ENCODE measurements at regions of chr1 and their contacts with region 1.

Region 1: DNA sequence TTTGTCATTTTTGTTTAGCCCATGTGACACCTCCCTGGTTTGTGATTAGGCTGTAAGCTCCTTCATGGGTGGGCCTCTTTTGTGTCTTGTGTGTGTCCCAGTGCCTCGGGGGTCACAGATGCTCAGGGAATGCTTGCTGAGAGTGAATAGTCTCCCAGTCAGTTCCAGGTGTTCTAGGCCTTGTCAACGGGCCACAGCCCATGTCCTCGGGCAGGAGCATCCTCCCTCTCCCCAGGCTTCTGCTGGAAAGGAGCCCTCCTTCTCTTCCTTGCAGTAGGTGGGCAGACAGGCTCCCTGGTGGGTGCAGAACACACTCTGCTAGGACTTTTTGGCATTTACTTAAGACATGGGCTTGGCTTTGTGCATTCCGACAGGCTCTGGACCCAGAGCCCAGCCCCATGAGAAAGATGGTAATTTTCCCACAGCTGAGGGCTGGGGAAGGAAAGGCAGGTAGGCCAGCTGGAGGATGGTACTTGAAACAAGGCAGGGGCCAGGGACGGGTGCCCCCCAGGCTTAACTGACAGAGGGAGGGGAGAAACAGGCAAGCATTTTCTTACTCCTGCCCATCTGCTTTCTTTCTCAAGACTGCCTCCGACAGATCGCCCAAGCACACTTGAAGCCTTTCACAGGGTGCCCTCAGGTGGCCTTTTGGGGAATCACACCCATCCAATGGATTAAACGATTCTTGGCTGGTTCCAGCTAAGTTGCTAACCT is 7.1 kb upstream of the CPLANE2 start:
- DNase-seq: peak; percentile 54 to 84 (median 77)
- ATAC-seq: peak; percentile 98
- H3K4me3 ChIP-seq: no peak overlapping the region
- H3K4me3 Mint-ChIP-seq: no peak overlapping the region
- H3K27ac ChIP-seq: peak overlapping the region in 1 of 2 experiments; percentile 3
- H3K27ac Mint-ChIP-seq: peak overlapping the region; percentile 41
- H3K4me1 ChIP-seq: peaks cover 3% of the 10 kb centered on the region
- H3K4me1 Mint-ChIP-seq: peaks cover 9% of the 10 kb centered on the region
- H3K27me3 ChIP-seq: no peaks in the 10 kb centered on the region
- H3K27me3 Mint-ChIP-seq: no peaks in the 10 kb centered on the region
- CTCF ChIP-seq: peak; percentile 74

Region 2: DNA sequence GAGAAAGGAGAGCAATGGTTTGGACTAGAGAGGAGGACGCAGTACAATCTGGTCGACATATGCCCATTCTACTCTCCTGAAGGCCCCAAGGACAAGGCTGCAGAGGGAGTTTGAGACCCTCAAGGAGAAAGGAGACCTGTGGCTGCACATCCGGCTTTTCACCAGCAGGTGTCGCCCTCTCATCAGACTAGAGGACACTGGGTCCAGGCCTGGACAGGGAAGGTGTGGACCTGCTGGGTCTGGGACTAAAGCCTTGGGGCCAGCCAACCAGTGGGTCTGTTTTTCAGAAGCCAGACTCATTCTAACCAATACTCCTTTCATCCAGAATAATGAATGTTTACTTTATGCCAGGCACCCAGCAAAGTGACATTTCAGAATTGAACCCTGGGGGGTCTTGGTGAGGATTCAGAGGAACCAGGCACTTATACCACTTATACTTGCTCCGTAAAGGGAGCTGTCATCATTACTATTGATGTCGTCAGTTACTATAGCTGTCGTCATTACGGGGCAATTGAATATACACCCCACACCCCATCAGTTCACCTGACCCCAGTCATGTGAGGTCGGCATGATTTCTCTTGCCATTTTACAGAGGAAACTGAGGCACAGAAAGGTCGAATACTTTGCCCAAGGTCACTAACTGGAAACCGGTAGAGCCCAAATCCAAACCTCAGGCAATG is 234.9 kb before region 1 on chr1:
- CTCF ChIA-PET with region 1: no interaction called
- POLR2A ChIA-PET with region 1: no interaction called
- intact Hi-C with region 1: loop called in 1 of 2 experiments (anchors 5 kb)
- DNase-seq: peak; percentile 53 to 82 (median 73)
- ATAC-seq: peak; percentile 69
- H3K4me3 ChIP-seq: no peak overlapping the region
- H3K4me3 Mint-ChIP-seq: no peak overlapping the region
- H3K27ac ChIP-seq: no peak overlapping the region
- H3K27ac Mint-ChIP-seq: no peak overlapping the region
- H3K4me1 ChIP-seq: peaks cover 5% of the 10 kb centered on the region
- H3K4me1 Mint-ChIP-seq: peaks cover 4% of the 10 kb centered on the region
- H3K27me3 ChIP-seq: peaks cover 0 to 2% of the 10 kb centered on the region in 2 experiments
- H3K27me3 Mint-ChIP-seq: peaks cover 5% of the 10 kb centered on the region
- CTCF ChIP-seq: peak; percentile 99

Region 3: DNA sequence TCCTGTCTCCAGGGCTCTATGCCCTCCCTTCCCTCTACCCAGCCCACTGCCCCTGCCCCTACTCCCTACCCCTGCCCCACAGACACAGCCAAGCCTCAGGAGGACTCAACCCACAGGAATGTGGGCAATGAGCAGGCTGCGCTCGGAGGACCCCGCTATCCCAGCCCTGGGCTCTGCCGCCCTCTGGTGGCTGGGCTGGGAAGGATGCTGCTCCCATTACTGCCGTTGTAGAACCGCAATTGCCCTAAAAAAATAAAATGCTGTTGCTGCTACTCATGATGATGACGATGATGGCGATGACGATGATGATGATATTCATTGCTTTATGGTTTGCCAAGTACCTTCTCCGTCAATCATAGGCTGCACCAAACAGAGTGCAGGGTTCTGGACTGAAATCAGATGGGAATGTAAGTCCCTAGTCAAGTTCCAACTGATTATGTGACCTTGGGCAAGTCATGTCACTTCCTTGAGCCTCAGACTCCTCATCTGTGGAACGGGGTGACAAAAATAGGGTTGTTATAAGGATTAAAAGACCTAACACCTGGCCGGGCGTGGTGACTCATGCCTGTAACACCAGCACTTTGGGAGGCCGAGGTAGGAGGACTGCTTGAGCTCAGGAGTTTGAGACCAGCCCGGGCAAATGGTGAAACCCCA is 56.2 kb before region 1 on chr1:
- CTCF ChIA-PET with region 1: interaction called, 17 read pairs
- POLR2A ChIA-PET with region 1: no interaction called
- intact Hi-C with region 1: loop called (anchors 1 to 2 kb)
- DNase-seq: peak; percentile 55 to 89 (median 76)
- ATAC-seq: peak; percentile 97
- H3K4me3 ChIP-seq: no peak overlapping the region
- H3K4me3 Mint-ChIP-seq: no peak overlapping the region
- H3K27ac ChIP-seq: no peak overlapping the region
- H3K27ac Mint-ChIP-seq: no peak overlapping the region
- H3K4me1 ChIP-seq: peaks cover 5% of the 10 kb centered on the region
- H3K4me1 Mint-ChIP-seq: peaks cover 4% of the 10 kb centered on the region
- H3K27me3 ChIP-seq: peaks cover 0 to 2% of the 10 kb centered on the region in 2 experiments
- H3K27me3 Mint-ChIP-seq: peaks cover 7% of the 10 kb centered on the region
- CTCF ChIP-seq: peak; percentile 97

Region 4: DNA sequence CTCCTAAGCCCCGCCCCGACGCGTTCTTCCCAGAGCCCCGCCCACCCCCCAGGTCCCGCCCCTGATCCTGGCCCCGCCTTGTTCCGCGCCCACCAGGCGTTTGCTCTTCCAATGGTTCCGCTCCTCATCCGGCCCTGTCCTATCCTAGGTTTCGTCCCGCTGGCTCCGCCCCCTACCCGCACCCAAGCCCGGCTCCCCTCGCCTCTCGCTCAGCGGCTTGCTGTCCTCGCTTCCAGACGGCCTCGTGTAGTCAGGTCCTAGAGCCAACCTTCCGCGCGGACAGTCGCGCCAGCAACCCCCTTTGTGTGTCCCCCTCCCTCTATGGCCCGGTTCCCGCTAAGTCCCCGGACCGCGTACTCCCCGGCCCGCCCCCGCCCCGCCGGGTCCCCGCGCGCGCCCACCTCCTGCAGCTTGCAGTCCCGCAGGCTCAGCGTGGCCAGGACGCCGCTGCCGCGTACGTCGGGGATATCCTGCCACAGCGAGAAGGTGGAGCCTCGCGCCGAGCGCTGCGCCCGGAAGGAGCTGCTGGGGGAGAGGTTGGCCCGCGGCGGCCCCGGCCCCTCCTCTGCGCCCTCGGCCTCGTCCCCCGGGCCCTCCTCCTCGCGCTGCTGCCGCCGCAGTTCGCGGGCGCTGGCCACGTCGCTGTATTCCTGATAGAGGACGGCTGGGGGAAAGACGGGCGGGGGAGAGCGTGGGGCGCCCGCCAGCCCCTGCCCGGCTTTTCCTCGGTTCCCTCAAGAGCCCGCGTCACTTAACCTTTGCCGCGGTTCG is 37.4 kb before region 1 on chr1:
- CTCF ChIA-PET with region 1: interaction called, 42 read pairs
- POLR2A ChIA-PET with region 1: no interaction called
- intact Hi-C with region 1: loop called (anchors 1 kb)
- DNase-seq: peak; percentile 84 to 97 (median 93)
- ATAC-seq: peak; percentile 86
- H3K4me3 ChIP-seq: peak overlapping the region; percentile 68 to 83
- H3K4me3 Mint-ChIP-seq: peak overlapping the region; percentile 93
- H3K27ac ChIP-seq: peak overlapping the region; percentile 69 to 87
- H3K27ac Mint-ChIP-seq: peak overlapping the region; percentile 95
- H3K4me1 ChIP-seq: peaks cover 14% of the 10 kb centered on the region
- H3K4me1 Mint-ChIP-seq: peaks cover 10% of the 10 kb centered on the region
- H3K27me3 ChIP-seq: no peaks in the 10 kb centered on the region
- H3K27me3 Mint-ChIP-seq: no peaks in the 10 kb centered on the region
- CTCF ChIP-seq: no peak

Region 5: GRCh38 chr1:16442265-16442664 is 198.2 kb after region 1 on chr1:
- CTCF ChIA-PET with region 1: no interaction called
- POLR2A ChIA-PET with region 1: no interaction called
- intact Hi-C with region 1: no loop called
- DNase-seq: no peak
- ATAC-seq: no peak
- H3K4me3 ChIP-seq: no peak overlapping the region
- H3K4me3 Mint-ChIP-seq: peak overlapping the region; percentile 88
- H3K27ac ChIP-seq: peak overlapping the region in 1 of 2 experiments; percentile 33
- H3K27ac Mint-ChIP-seq: peak overlapping the region; percentile 94
- H3K4me1 ChIP-seq: peaks cover 29% of the 10 kb centered on the region
- H3K4me1 Mint-ChIP-seq: peaks cover 41% of the 10 kb centered on the region
- H3K27me3 ChIP-seq: no peaks in the 10 kb centered on the region
- H3K27me3 Mint-ChIP-seq: no peaks in the 10 kb centered on the region
- CTCF ChIP-seq: no peak